ENCODE measurements at regions of chr16 and their contacts with region 1.

Region 1: DNA sequence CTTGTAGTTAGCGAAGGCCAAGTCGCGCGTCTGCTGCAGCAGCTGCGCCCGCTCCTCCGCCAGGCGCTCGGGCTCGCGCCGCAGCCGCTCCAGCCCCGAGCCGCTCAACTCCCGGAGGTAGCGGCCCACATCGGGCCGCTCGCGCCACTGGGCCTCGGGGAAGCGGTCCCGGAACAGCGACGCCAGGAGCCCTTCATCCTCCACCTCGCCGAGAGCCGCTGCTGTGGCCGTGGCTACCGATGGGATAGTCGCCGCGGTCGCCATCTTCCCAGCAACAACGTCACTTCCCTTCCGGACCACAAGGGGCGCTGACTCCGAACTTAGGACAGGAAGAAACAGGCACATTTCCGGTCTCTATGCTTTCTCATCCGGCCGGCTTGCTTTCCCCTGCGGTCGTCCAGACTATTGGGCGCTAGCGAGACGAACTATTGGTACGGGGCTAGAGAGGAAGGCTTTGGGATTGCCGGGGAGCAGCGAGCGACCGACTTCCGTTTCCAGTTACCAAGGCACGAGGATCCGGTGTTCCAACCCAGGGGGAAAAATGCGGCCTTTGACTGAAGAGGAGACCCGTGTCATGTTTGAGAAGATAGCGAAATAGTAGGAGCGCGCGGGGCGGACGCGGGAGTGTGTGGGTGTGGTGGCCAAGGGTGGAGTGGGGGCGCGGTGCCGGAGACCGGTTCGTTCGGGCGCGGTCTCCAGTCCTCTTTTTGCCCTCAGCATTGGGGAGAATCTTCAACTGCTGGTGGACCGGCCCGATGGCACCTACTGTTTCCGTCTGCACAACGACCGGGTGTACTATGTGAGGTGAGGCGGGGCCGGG is at the starts of genes COG8 and NIP7:
- DNase-seq: peak; percentile 92
- ATAC-seq: peak; percentile 97
- H3K4me3 ChIP-seq: peak within 1 kb of the TSS; percentile 91
- H3K27ac ChIP-seq: peak within 1 kb of the TSS; percentile 85
- H3K4me1 ChIP-seq: peaks cover 5% of the 10 kb centered on the region
- H3K27me3 ChIP-seq: no peaks in the 10 kb centered on the region
- CTCF ChIP-seq: peak; percentile 70 to 83 (median 80)
- EP300 ChIP-seq: 0 out of 4 replicates have a peak, but pooled peaks of 1 of the 2 experiments have one; percentile 28
- POLR2A ChIP-seq: peak; percentile 98
- RAD21 ChIP-seq: no peak
- polyA plus RNA-seq, gene COG8: 2.8 to 3.1 TPM
- polyA plus RNA-seq, gene NIP7: 57.8 to 62.9 TPM

Region 2: DNA sequence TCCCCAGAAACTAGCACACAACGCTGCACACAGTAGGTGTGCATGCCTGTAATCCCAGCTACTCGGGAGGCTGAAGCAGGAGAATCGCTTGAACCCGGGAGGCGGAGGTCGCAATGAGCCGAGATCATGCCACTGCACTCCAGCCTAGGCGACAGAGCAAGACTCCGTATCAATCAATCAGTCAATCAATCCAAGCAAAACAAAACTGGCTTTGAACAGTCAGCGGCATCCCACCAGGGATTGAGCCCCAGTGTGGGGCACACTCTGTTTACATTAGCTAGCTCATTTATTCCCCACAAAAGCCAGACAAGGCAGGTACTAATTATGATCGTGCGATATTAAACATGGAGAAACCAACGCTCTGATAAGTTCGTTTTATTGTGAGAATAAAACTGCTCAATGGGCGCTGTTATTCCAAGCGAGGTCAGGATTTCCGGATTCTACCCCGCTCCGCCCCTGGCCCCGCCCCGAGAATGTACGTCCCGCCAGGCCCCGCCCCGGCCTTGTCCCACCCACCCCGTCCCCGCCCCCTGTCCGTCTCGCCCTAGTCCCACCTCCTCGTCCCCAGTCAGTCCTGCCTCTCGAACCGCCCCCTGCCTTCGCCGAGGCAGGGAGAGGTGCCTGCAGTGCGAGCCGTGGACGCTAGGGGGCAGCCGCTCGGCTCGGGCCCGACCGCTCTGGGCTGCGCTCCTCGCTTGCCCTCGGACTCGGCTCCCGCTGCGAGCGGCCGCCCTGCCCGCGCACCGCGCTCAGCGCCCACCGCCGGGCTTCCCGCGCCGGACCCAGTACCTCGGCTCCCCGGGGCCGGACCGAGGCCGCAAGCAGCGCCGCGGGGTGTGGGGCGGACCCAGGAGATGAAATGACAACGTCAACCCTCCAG is 28.6 kb before region 1 on chr16 and contains the start of gene VPS4A:
- CTCF ChIA-PET with region 1: interaction called, 4 read pairs
- POLR2A ChIA-PET with region 1: interaction called, 3 read pairs
- RAD21 ChIA-PET with region 1: no interaction called
- SMC1A ChIA-PET with region 1: interaction called, 3 read pairs
- in situ Hi-C with region 1: no loop called
- intact Hi-C with region 1: loop called (anchors 1 kb)
- DNase-seq: peak; percentile 89
- ATAC-seq: peak; percentile 96
- H3K4me3 ChIP-seq: peak within 1 kb of the TSS; percentile 99
- H3K27ac ChIP-seq: peak within 1 kb of the TSS; percentile 82
- H3K4me1 ChIP-seq: no peaks in the 10 kb centered on the region
- H3K27me3 ChIP-seq: no peaks in the 10 kb centered on the region
- CTCF ChIP-seq: peak; percentile 81 to 96 (median 92)
- EP300 ChIP-seq: no peak
- POLR2A ChIP-seq: peak; percentile 88
- RAD21 ChIP-seq: peak; percentile 38
- polyA plus RNA-seq, gene VPS4A: 5.2 to 8.7 TPM

Region 3: GRCh38 chr16:69386596-69386995 is 47.1 kb after region 1 on chr16:
- CTCF ChIA-PET with region 1: interaction called, 3 read pairs
- POLR2A ChIA-PET with region 1: interaction called, 3 read pairs
- RAD21 ChIA-PET with region 1: interaction called, 5 read pairs
- SMC1A ChIA-PET with region 1: interaction called, 7 read pairs
- in situ Hi-C with region 1: no loop called
- intact Hi-C with region 1: loop called (anchors 2 kb)
- DNase-seq: no peak
- ATAC-seq: no peak
- H3K4me3 ChIP-seq: peak overlapping the region; percentile 93; the same call in 1 of the 2 replicates
- H3K27ac ChIP-seq: no peak overlapping the region
- H3K4me1 ChIP-seq: peaks cover 9% of the 10 kb centered on the region; the same call in 1 of the 2 replicates
- H3K27me3 ChIP-seq: no peaks in the 10 kb centered on the region
- CTCF ChIP-seq: no peak
- EP300 ChIP-seq: no peak
- POLR2A ChIP-seq: no peak
- RAD21 ChIP-seq: no peak

Region 4: DNA sequence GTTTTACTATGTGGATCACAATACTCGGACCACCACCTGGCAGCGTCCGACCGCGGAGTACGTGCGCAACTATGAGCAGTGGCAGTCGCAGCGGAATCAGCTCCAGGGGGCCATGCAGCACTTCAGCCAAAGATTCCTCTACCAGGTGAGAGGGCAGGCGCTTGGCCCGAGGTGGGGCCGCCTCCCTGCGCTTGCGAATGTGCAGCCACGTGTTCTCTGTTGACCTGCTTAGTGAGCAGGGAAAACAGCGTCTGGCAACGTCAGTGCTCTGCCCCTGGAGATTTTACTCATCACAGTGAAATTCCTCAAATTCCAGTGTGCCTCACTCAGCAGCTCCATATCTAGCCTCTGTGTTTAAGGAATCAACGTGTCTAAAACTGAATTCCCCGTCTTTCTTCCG is 578.2 kb after region 1 on chr16:
- CTCF ChIA-PET with region 1: no interaction called
- POLR2A ChIA-PET with region 1: no interaction called
- RAD21 ChIA-PET with region 1: no interaction called
- SMC1A ChIA-PET with region 1: no interaction called
- in situ Hi-C with region 1: no loop called
- intact Hi-C with region 1: no loop called
- DNase-seq: no peak
- ATAC-seq: no peak
- H3K4me3 ChIP-seq: no peak overlapping the region
- H3K27ac ChIP-seq: no peak overlapping the region
- H3K4me1 ChIP-seq: no peaks in the 10 kb centered on the region
- H3K27me3 ChIP-seq: no peaks in the 10 kb centered on the region
- CTCF ChIP-seq: no peak
- EP300 ChIP-seq: no peak
- POLR2A ChIP-seq: no peak
- RAD21 ChIP-seq: no peak

Measured in GM12878 (cell line).